ENCODE measurements at regions of chr6 and their contacts with region 1.

Region 1: GRCh38 chr6:131063028-131063763 is at the start of gene EPB41L2:
- DNase-seq: peak; percentile 90 to 93
- ATAC-seq: peak; percentile 96 to 98 (median 98)
- H3K4me3 ChIP-seq: peak within 1 kb of the TSS; percentile 91
- H3K27ac ChIP-seq: peak within 1 kb of the TSS; percentile 62
- H3K4me1 ChIP-seq: no peaks in the 10 kb centered on the region
- H3K27me3 ChIP-seq: no peaks in the 10 kb centered on the region
- CTCF ChIP-seq: peak; percentile 40
- total RNA-seq, gene EPB41L2: 22.7 to 75.7 (median 33.8) TPM

Region 2: GRCh38 chr6:131101911-131102680 is 38.9 kb after region 1 on chr6:
- intact Hi-C with region 1: no loop called
- DNase-seq: no peak
- ATAC-seq: no peak
- H3K4me3 ChIP-seq: no peak overlapping the region
- H3K27ac ChIP-seq: no peak overlapping the region
- H3K4me1 ChIP-seq: no peaks in the 10 kb centered on the region
- H3K27me3 ChIP-seq: no peaks in the 10 kb centered on the region
- CTCF ChIP-seq: no peak

Region 3: GRCh38 chr6:131116749-131117360 is 53.7 kb after region 1 on chr6:
- intact Hi-C with region 1: loop called in 1 of 2 experiments (anchors 5 kb)
- DNase-seq: no peak
- ATAC-seq: peak in 2 of 4 donors; percentile 50 to 65
- H3K4me3 ChIP-seq: no peak overlapping the region
- H3K27ac ChIP-seq: no peak overlapping the region
- H3K4me1 ChIP-seq: no peaks in the 10 kb centered on the region
- H3K27me3 ChIP-seq: no peaks in the 10 kb centered on the region
- CTCF ChIP-seq: peak; percentile 65

Measured in psoas muscle (tissue), 8 donors.